Endothelial cell of umbilical vein (primary cell): ENCODE measurements at regions of chr11 and their contacts with region 1.

Region 1: DNA sequence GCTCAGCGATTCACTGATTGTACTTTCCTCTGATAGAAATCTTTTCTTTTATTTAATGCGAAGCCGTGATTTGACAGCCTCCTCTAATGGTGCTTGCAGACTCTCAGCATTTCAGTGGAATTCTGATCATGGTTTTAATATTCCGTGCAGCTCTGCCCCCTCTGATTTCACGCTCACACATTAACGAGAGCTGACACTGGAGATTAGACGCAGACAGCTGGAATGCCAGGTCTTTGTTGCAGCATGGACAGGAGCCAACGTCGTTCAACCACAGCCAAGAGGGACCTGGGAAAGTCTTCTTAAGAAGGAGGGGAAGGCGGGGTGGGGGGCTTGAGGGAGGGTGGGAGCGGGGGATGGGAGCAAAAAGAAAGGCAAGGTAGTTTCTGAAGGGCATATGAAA is 186.4 kb downstream of the BLID start:
- DNase-seq: peak; percentile 63
- H3K4me3 ChIP-seq: peak overlapping the region in 2 of 3 experiments; percentile 16 to 39
- H3K27ac ChIP-seq: no peak overlapping the region
- H3K4me1 ChIP-seq: peaks cover 8% of the 10 kb centered on the region
- H3K27me3 ChIP-seq: peaks cover 0 to 2% of the 10 kb centered on the region in 2 experiments
- CTCF ChIP-seq: no peak
- POLR2A ChIP-seq: no peak

Region 2: DNA sequence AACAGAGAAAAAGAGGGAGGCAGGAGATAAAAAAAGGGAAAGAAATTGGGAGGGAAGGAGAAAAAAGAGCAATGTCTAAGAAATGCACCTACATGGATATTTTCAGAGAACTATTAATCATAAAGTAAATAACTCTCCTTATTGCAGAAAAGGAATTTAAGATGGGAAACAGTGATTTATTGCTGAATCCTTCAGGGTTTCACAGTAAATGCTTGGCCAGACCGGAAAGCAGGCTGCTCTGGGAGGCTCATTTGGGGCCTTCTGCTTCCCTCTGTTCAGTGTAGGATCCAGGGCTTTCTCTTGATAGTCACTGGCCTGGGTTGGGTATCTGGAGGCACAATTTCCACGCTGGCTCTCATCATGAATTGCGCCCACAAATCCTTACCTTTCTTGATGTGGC is 152.5 kb before region 1 on chr11:
- CTCF ChIA-PET with region 1: no interaction called
- POLR2A ChIA-PET with region 1: no interaction called
- dilution Hi-C with region 1: no loop called
- intact Hi-C with region 1: loop called (anchors 5 kb)
- DNase-seq: peak; percentile 12
- H3K4me3 ChIP-seq: no peak overlapping the region
- H3K27ac ChIP-seq: no peak overlapping the region
- H3K4me1 ChIP-seq: no peaks in the 10 kb centered on the region
- H3K27me3 ChIP-seq: no peaks in the 10 kb centered on the region
- CTCF ChIP-seq: no peak
- POLR2A ChIP-seq: no peak

Region 3: GRCh38 chr11:121892131-121892681 is 37.4 kb before region 1 on chr11:
- CTCF ChIA-PET with region 1: no interaction called
- POLR2A ChIA-PET with region 1: no interaction called
- dilution Hi-C with region 1: no loop called
- intact Hi-C with region 1: loop called (anchors 2 kb)
- DNase-seq: peak; percentile 87
- H3K4me3 ChIP-seq: no peak overlapping the region
- H3K27ac ChIP-seq: no peak overlapping the region
- H3K4me1 ChIP-seq: peaks cover 12% of the 10 kb centered on the region
- H3K27me3 ChIP-seq: peaks cover 3 to 4% of the 10 kb centered on the region in 2 experiments
- CTCF ChIP-seq: no peak
- POLR2A ChIP-seq: no peak